Heart right ventricle (tissue), 16 donors: ENCODE measurements at regions of chr10 and their contacts with region 1.

Region 1: DNA sequence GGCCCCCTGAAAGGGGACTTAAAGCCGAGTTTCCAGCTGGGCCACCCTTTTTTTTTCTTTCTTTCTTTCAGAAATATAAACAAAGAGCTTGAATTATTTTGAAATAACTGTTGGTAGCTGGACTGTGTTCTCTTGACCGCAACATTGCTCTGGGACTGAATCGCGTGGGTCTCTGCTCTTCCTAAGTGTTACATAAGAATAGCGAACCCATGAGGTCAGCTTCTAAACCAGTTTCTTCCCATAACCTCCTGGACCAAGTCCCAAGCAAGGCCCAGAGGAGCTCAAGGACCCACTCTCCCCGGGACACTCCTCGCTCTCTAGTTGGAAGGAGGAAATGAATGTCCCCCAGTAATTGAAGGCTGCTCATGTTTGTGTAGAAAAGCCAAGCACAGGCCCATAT is 91.1 kb downstream of the CXCL12 start:
- DNase-seq: peak in 1 of 2 donors; percentile 88
- ATAC-seq: peak; percentile 90 to 97 (median 95)
- H3K4me3 ChIP-seq: peak overlapping the region in 7 of 10 donors; percentile 1 to 43 (median 30)
- H3K27ac ChIP-seq: peak overlapping the region; percentile 74 to 95 (median 87)
- H3K4me1 ChIP-seq: peaks cover 3 to 24% (median 15%) of the 10 kb centered on the region in 9 donors
- H3K27me3 ChIP-seq: peaks cover 0 to 27% (median 0%) of the 10 kb centered on the region in 7 donors
- CTCF ChIP-seq: no peak

Region 2: GRCh38 chr10:44153918-44154670 is 139.7 kb before region 1 on chr10:
- intact Hi-C with region 1: no loop called
- DNase-seq: no peak
- ATAC-seq: no peak
- H3K4me3 ChIP-seq: no peak overlapping the region
- H3K27ac ChIP-seq: peak overlapping the region in 1 of 10 donors; percentile 47
- H3K4me1 ChIP-seq: peaks cover 0 to 15% (median 8%) of the 10 kb centered on the region in 9 donors
- H3K27me3 ChIP-seq: no peaks in the 10 kb centered on the region
- CTCF ChIP-seq: no peak

Region 3: GRCh38 chr10:44206127-44206818 is 87.6 kb before region 1 on chr10:
- intact Hi-C with region 1: loop called in 1 of 10 experiments (anchors 10 kb)
- DNase-seq: no peak
- ATAC-seq: no peak
- H3K4me3 ChIP-seq: no peak overlapping the region
- H3K27ac ChIP-seq: no peak overlapping the region
- H3K4me1 ChIP-seq: peaks cover 0 to 21% (median 0%) of the 10 kb centered on the region in 9 donors
- H3K27me3 ChIP-seq: no peaks in the 10 kb centered on the region
- CTCF ChIP-seq: no peak

Region 4: GRCh38 chr10:44706745-44707144 is 412.9 kb after region 1 on chr10:
- intact Hi-C with region 1: no loop called
- DNase-seq: no peak
- ATAC-seq: no peak
- H3K4me3 ChIP-seq: no peak overlapping the region
- H3K27ac ChIP-seq: no peak overlapping the region
- H3K4me1 ChIP-seq: no peaks in the 10 kb centered on the region
- H3K27me3 ChIP-seq: no peaks in the 10 kb centered on the region
- CTCF ChIP-seq: no peak